Cardiac septum (tissue), 1 donor: ENCODE measurements at regions of chr7 and their contacts with region 1.

Region 1: GRCh38 chr7:69517985-69518704 is 80.1 kb upstream of the AUTS2 start:
- DNase-seq: no peak

Region 2: GRCh38 chr7:69359003-69359700 is 159.0 kb before region 1 on chr7:
- intact Hi-C with region 1: no loop called
- DNase-seq: no peak

Region 3: GRCh38 chr7:69457595-69458504 is 60.3 kb before region 1 on chr7:
- intact Hi-C with region 1: loop called (anchors 2 kb)
- DNase-seq: peak; percentile 87

Region 4: GRCh38 chr7:69482676-69483075 is 35.5 kb before region 1 on chr7:
- intact Hi-C with region 1: loop called (anchors 2 kb)
- DNase-seq: no peak